Activated CD4-positive, alpha-beta T cell treated with anti-CD3 and anti-CD28 coated beads for 36 hours (primary cell): ENCODE measurements at regions of chr4 and their contacts with region 1.

Region 1: GRCh38 chr4:177047070-177047850 is 254.5 kb upstream of the VEGFC start:
- DNase-seq: peak; percentile 79
- ATAC-seq: peak; percentile 87
- H3K4me3 Mint-ChIP-seq: no peak overlapping the region
- H3K27ac Mint-ChIP-seq: no peak overlapping the region
- H3K4me1 Mint-ChIP-seq: no peaks in the 10 kb centered on the region
- H3K27me3 Mint-ChIP-seq: peaks cover 10% of the 10 kb centered on the region

Region 2: GRCh38 chr4:176377780-176378179 is 669.5 kb before region 1 on chr4:
- CTCF ChIA-PET with region 1: interaction called, 19 read pairs
- POLR2A ChIA-PET with region 1: no interaction called
- intact Hi-C with region 1: loop called (anchors 1 kb)
- DNase-seq: no peak
- ATAC-seq: no peak
- H3K4me3 Mint-ChIP-seq: no peak overlapping the region
- H3K27ac Mint-ChIP-seq: no peak overlapping the region
- H3K4me1 Mint-ChIP-seq: no peaks in the 10 kb centered on the region
- H3K27me3 Mint-ChIP-seq: peaks cover 3% of the 10 kb centered on the region

Region 3: GRCh38 chr4:176789955-176790354 is 257.3 kb before region 1 on chr4:
- CTCF ChIA-PET with region 1: interaction called, 4 read pairs
- POLR2A ChIA-PET with region 1: no interaction called
- intact Hi-C with region 1: loop called (anchors 2 kb)
- DNase-seq: no peak
- ATAC-seq: peak; percentile 74
- H3K4me3 Mint-ChIP-seq: no peak overlapping the region
- H3K27ac Mint-ChIP-seq: no peak overlapping the region
- H3K4me1 Mint-ChIP-seq: peaks cover 3% of the 10 kb centered on the region
- H3K27me3 Mint-ChIP-seq: peaks cover 37% of the 10 kb centered on the region

Region 4: GRCh38 chr4:176949029-176949428 is 98.2 kb before region 1 on chr4:
- CTCF ChIA-PET with region 1: no interaction called
- POLR2A ChIA-PET with region 1: no interaction called
- intact Hi-C with region 1: no loop called
- DNase-seq: no peak
- ATAC-seq: no peak
- H3K4me3 Mint-ChIP-seq: no peak overlapping the region
- H3K27ac Mint-ChIP-seq: no peak overlapping the region
- H3K4me1 Mint-ChIP-seq: no peaks in the 10 kb centered on the region
- H3K27me3 Mint-ChIP-seq: peaks cover 2% of the 10 kb centered on the region

Region 5: DNA sequence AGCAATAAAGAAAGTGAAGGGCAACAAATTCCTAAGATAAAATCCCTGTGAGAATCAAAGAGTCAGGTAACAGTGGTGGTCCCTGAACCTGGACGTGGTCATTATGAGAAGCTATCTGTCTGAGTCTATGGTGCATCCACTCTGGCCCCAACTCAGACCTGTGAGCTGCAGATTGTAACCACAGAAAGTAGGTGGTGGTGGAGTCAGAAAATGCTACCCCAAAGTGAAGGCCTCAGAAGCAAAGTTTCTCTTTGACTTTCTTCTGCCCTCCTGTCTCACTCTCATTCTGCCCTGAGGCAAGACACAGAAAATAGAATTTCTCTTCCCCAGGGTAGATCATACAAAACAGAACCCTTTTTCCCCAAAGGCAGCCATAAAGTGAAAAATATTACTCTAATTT is 178.3 kb after region 1 on chr4:
- CTCF ChIA-PET with region 1: no interaction called
- POLR2A ChIA-PET with region 1: no interaction called
- intact Hi-C with region 1: no loop called
- DNase-seq: no peak
- ATAC-seq: no peak
- H3K4me3 Mint-ChIP-seq: no peak overlapping the region
- H3K27ac Mint-ChIP-seq: no peak overlapping the region
- H3K4me1 Mint-ChIP-seq: peaks cover 8% of the 10 kb centered on the region
- H3K27me3 Mint-ChIP-seq: peaks cover 2% of the 10 kb centered on the region

Region 6: GRCh38 chr4:177339477-177340374 is 292.5 kb after region 1 on chr4:
- CTCF ChIA-PET with region 1: no interaction called
- POLR2A ChIA-PET with region 1: no interaction called
- intact Hi-C with region 1: loop called (anchors 5 kb)
- DNase-seq: no peak
- ATAC-seq: peak; percentile 83
- H3K4me3 Mint-ChIP-seq: no peak overlapping the region
- H3K27ac Mint-ChIP-seq: no peak overlapping the region
- H3K4me1 Mint-ChIP-seq: peaks cover 9% of the 10 kb centered on the region
- H3K27me3 Mint-ChIP-seq: no peaks in the 10 kb centered on the region